H1 (cell line): ENCODE measurements at regions of chr9 and their contacts with region 1.

Region 1: DNA sequence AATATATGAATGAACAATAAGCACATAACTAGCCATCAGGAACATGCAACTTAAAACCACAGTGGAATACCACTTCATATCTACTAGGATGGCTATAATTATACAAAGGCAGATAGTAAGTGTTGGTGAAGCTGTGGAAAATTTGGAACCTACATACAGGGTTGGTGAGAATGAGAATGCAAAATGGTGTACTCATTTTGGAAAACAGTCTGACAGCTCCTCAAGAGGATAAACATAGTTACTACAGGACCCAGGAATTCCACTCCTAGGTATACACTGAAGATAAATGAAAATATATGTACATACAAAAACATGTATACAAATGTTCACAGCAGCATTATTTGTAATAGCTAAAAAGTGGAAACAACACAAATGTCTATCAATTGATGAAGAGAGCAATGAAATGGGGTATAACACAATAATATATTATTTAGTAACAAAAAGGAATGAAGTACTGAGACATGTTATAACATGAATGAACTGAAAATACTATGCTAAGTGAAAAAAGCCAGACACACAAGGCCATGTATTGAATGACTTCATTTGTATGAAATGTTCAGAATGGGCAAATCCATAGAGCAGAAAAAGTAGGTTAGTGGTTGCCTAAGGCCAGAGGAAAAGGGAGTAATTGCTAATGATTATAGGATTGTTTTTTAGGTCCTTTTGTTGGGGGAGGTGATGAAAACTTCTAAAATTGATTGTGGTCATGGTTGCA is 31.2 kb upstream of the CDK5RAP2 start:
- DNase-seq: no peak
- H3K4me3 ChIP-seq: no peak overlapping the region
- H3K27ac ChIP-seq: no peak overlapping the region
- H3K4me1 ChIP-seq: no peaks in the 10 kb centered on the region
- H3K27me3 ChIP-seq: no peaks in the 10 kb centered on the region
- CTCF ChIP-seq: peak in 1 of 3 experiments; percentile 11; a peak in 2 of 4 replicates
- EP300 ChIP-seq: no peak
- POLR2A ChIP-seq: no peak
- RAD21 ChIP-seq: peak in 1 of 2 experiments; percentile 16; a peak in 1 of 4 replicates

Region 2: GRCh38 chr9:120625222-120625621 is 14.1 kb after region 1 on chr9:
- CTCF ChIA-PET with region 1: interaction called, 15 read pairs
- POLR2A ChIA-PET with region 1: no interaction called
- DNase-seq: no peak
- H3K4me3 ChIP-seq: no peak overlapping the region
- H3K27ac ChIP-seq: no peak overlapping the region
- H3K4me1 ChIP-seq: peaks cover 0 to 6% (median 0%) of the 10 kb centered on the region in 4 experiments; a peak in 1 of 7 replicates
- H3K27me3 ChIP-seq: no peaks in the 10 kb centered on the region
- CTCF ChIP-seq: no peak
- EP300 ChIP-seq: no peak
- POLR2A ChIP-seq: no peak
- RAD21 ChIP-seq: no peak

Region 3: DNA sequence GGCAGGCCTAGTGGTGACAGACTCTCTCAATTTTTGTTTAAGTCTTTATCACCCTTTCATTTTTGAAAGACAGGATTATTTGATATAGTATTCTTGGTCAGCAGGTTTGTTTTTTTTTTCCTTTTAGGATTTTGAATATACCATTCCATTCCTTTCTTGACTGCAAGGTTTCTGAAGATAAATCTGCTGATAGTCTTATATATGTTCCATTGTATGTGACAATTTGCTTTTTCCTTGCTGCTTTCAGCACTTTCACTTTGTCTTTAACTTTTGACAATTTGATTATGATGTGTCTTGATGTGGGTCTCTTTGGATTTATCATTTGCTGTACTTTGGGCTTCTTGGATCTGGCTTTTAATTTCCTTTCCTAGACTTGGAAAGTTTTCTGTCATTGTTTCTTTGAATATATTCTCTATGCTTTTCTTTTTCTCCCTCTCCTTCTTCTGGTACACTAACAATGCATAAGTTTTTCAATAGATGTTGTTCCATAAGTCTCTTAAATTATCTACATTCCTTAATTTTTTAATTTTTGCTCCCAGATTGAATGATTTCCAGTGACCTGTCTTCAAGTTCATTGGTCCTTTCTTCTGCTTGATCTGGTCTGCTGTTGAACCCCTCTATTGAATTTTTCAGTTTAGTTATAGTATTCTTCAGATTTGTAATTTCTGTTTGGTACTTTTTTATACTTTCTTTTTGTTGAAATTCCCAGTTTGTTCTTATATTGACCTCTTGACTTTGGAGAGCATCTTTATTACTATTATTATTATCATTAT is 196.7 kb after region 1 on chr9:
- CTCF ChIA-PET with region 1: no interaction called
- POLR2A ChIA-PET with region 1: no interaction called
- DNase-seq: no peak
- H3K4me3 ChIP-seq: no peak overlapping the region
- H3K27ac ChIP-seq: no peak overlapping the region
- H3K4me1 ChIP-seq: no peaks in the 10 kb centered on the region
- H3K27me3 ChIP-seq: no peaks in the 10 kb centered on the region
- CTCF ChIP-seq: no peak
- EP300 ChIP-seq: no peak
- POLR2A ChIP-seq: no peak
- RAD21 ChIP-seq: no peak